ENCODE measurements at regions of chr3 and their contacts with region 1.

Region 1: GRCh38 chr3:183306798-183307671 is 54.0 kb downstream of the B3GNT5 start:
- DNase-seq: peak; percentile 93
- H3K4me3 Mint-ChIP-seq: peak overlapping the region; percentile 54
- H3K27ac Mint-ChIP-seq: peak overlapping the region; percentile 84
- H3K4me1 Mint-ChIP-seq: peaks cover 52% of the 10 kb centered on the region
- H3K27me3 Mint-ChIP-seq: no peaks in the 10 kb centered on the region
- CTCF ChIP-seq: no peak

Region 2: GRCh38 chr3:183260167-183260904 is 46.7 kb before region 1 on chr3:
- CTCF ChIA-PET with region 1: interaction called, 3 read pairs
- intact Hi-C with region 1: loop called (anchors 2 kb)
- DNase-seq: no peak
- H3K4me3 Mint-ChIP-seq: no peak overlapping the region
- H3K27ac Mint-ChIP-seq: peak overlapping the region; percentile 1
- H3K4me1 Mint-ChIP-seq: peaks cover 54% of the 10 kb centered on the region
- H3K27me3 Mint-ChIP-seq: no peaks in the 10 kb centered on the region
- CTCF ChIP-seq: no peak

Region 3: DNA sequence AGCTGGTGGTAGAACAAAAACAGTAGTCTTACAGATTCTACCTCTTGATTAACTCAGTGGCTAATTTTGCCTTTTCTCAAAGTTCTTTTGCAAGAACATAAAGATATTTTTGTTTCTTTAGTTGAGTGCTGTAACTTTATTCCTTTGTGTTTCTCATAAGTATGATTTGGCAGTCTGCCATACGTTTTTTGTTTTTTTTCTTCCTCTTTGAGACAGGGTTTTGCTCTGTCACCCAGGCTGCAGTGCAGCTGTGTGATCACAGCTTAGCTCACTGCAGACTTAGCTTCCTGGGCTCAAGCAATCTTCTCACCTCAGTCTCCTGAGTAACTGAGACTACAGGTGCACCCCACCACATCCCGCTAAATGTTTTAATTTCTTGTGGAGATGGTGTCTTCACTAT is 31.6 kb before region 1 on chr3:
- CTCF ChIA-PET with region 1: interaction called, 5 read pairs
- intact Hi-C with region 1: loop called (anchors 1 kb)
- DNase-seq: peak; percentile 64
- H3K4me3 Mint-ChIP-seq: peak overlapping the region; percentile 29
- H3K27ac Mint-ChIP-seq: peak overlapping the region; percentile 63
- H3K4me1 Mint-ChIP-seq: peaks cover 53% of the 10 kb centered on the region
- H3K27me3 Mint-ChIP-seq: no peaks in the 10 kb centered on the region
- CTCF ChIP-seq: no peak

Region 4: GRCh38 chr3:183285828-183286457 is 21.1 kb before region 1 on chr3:
- CTCF ChIA-PET with region 1: interaction called, 24 read pairs
- intact Hi-C with region 1: no loop called
- DNase-seq: peak; percentile 98
- H3K4me3 Mint-ChIP-seq: peak overlapping the region; percentile 44
- H3K27ac Mint-ChIP-seq: peak overlapping the region; percentile 94
- H3K4me1 Mint-ChIP-seq: peaks cover 53% of the 10 kb centered on the region
- H3K27me3 Mint-ChIP-seq: no peaks in the 10 kb centered on the region
- CTCF ChIP-seq: no peak

Region 5: DNA sequence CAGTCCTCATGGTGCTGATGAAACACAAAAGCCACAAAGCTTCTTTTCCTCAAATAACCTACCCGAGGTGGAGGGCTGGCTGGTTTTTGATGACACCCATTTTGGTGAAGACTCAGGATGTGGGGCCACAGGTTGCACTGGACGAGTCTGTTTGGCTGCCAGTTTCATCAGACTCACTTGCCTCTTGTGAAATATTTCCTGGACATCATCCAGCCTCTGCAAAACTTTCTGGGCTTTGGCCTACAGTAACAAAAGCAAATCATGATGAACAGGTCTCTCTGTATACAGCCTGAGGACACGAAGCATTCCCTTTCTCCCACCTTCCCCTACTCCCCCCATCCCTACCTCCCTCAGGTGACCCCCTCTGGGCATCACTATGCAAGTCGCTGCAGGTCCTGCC is 11.8 kb before region 1 on chr3:
- CTCF ChIA-PET with region 1: interaction called, 9 read pairs
- intact Hi-C with region 1: loop called (anchors 1 kb)
- DNase-seq: peak; percentile 73
- H3K4me3 Mint-ChIP-seq: no peak overlapping the region
- H3K27ac Mint-ChIP-seq: peak overlapping the region; percentile 75
- H3K4me1 Mint-ChIP-seq: peaks cover 58% of the 10 kb centered on the region
- H3K27me3 Mint-ChIP-seq: no peaks in the 10 kb centered on the region
- CTCF ChIP-seq: no peak

Region 6: GRCh38 chr3:183369117-183369516 is 62.1 kb after region 1 on chr3:
- CTCF ChIA-PET with region 1: interaction called, 3 read pairs
- intact Hi-C with region 1: loop called (anchors 5 kb)
- DNase-seq: no peak
- H3K4me3 Mint-ChIP-seq: no peak overlapping the region
- H3K27ac Mint-ChIP-seq: peak overlapping the region; percentile 90
- H3K4me1 Mint-ChIP-seq: peaks cover 56% of the 10 kb centered on the region
- H3K27me3 Mint-ChIP-seq: no peaks in the 10 kb centered on the region
- CTCF ChIP-seq: no peak